ENCODE measurements at regions of chr11 and their contacts with region 1.

Region 1: GRCh38 chr11:19076744-19077589 is 16.4 kb upstream of the MRGPRX2 start:
- DNase-seq: peak in 1 of 2 experiments; percentile 91
- H3K4me3 ChIP-seq: no peak overlapping the region
- H3K27ac ChIP-seq: no peak overlapping the region
- H3K4me1 ChIP-seq: peaks cover 2 to 8% (median 6%) of the 10 kb centered on the region in 4 experiments; a peak in 4 of 7 replicates
- H3K27me3 ChIP-seq: no peaks in the 10 kb centered on the region
- CTCF ChIP-seq: peak; percentile 71 to 91 (median 86)
- EP300 ChIP-seq: no peak
- POLR2A ChIP-seq: no peak
- RAD21 ChIP-seq: peak; percentile 60 to 72

Region 2: GRCh38 chr11:18994860-18995259 is 82.1 kb before region 1 on chr11:
- CTCF ChIA-PET with region 1: no interaction called
- POLR2A ChIA-PET with region 1: no interaction called
- DNase-seq: no peak
- H3K4me3 ChIP-seq: no peak overlapping the region
- H3K27ac ChIP-seq: no peak overlapping the region
- H3K4me1 ChIP-seq: no peaks in the 10 kb centered on the region
- H3K27me3 ChIP-seq: no peaks in the 10 kb centered on the region
- CTCF ChIP-seq: no peak
- EP300 ChIP-seq: no peak
- POLR2A ChIP-seq: no peak
- RAD21 ChIP-seq: no peak

Region 3: GRCh38 chr11:19060629-19061028 is 16.3 kb before region 1 on chr11 and contains the start of gene MRGPRX2:
- CTCF ChIA-PET with region 1: interaction called, 29 read pairs
- POLR2A ChIA-PET with region 1: no interaction called
- DNase-seq: no peak
- H3K4me3 ChIP-seq: no peak within 1 kb of the TSS
- H3K27ac ChIP-seq: no peak within 1 kb of the TSS
- H3K4me1 ChIP-seq: no peaks in the 10 kb centered on the region
- H3K27me3 ChIP-seq: no peaks in the 10 kb centered on the region
- CTCF ChIP-seq: no peak
- EP300 ChIP-seq: no peak
- POLR2A ChIP-seq: no peak
- RAD21 ChIP-seq: no peak
- total RNA-seq, gene MRGPRX2: not detected in 2 replicates

Region 4: DNA sequence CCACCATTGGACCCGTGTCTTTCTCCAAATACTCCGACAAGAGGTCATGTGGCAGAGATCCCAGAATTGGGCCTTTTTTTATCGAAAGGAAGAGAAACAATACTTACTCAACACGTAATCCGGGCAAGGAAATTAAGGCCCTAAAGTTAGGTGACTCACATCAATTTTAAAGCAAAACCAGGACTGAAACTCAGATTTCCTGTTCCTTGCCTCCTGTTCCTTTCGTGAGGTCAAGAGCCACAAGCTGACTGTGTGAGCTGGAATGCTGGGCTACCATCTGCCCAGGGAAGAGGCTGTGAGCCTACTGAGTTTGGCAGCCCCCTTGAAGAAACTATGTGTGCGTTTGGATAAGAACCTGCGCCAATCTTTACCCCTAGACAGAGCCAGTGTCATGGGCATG is 10.7 kb after region 1 on chr11:
- CTCF ChIA-PET with region 1: interaction called, 34 read pairs
- POLR2A ChIA-PET with region 1: no interaction called
- DNase-seq: no peak
- H3K4me3 ChIP-seq: no peak overlapping the region
- H3K27ac ChIP-seq: no peak overlapping the region
- H3K4me1 ChIP-seq: no peaks in the 10 kb centered on the region
- H3K27me3 ChIP-seq: no peaks in the 10 kb centered on the region
- CTCF ChIP-seq: no peak
- EP300 ChIP-seq: no peak
- POLR2A ChIP-seq: no peak
- RAD21 ChIP-seq: no peak

Region 5: GRCh38 chr11:19094859-19095258 is 17.9 kb after region 1 on chr11:
- CTCF ChIA-PET with region 1: interaction called, 34 read pairs
- POLR2A ChIA-PET with region 1: no interaction called
- DNase-seq: no peak
- H3K4me3 ChIP-seq: no peak overlapping the region
- H3K27ac ChIP-seq: no peak overlapping the region
- H3K4me1 ChIP-seq: no peaks in the 10 kb centered on the region
- H3K27me3 ChIP-seq: no peaks in the 10 kb centered on the region
- CTCF ChIP-seq: no peak
- EP300 ChIP-seq: no peak
- POLR2A ChIP-seq: no peak
- RAD21 ChIP-seq: no peak

Region 6: DNA sequence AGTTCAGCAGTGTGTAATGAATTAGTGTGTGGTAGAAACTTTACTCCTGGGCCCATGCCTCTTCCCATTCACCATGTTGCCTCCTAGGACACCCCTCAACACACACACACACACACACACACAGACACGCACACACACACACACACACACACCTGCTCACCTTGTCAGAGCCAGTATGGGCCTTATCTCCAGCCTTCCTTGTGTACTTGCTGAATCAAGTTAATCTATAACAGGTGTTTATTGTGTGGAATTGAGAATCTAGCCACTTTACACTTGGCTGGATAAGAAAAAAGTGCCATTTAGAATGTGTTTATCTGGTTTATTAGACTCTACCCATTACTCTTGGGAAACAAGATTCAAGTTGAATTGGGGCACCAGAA is 25.5 kb after region 1 on chr11:
- CTCF ChIA-PET with region 1: interaction called, 21 read pairs
- POLR2A ChIA-PET with region 1: no interaction called
- DNase-seq: no peak
- H3K4me3 ChIP-seq: no peak overlapping the region
- H3K27ac ChIP-seq: no peak overlapping the region
- H3K4me1 ChIP-seq: peaks cover 0 to 7% (median 3%) of the 10 kb centered on the region in 4 experiments; a peak in 4 of 7 replicates
- H3K27me3 ChIP-seq: no peaks in the 10 kb centered on the region
- CTCF ChIP-seq: no peak
- EP300 ChIP-seq: no peak
- POLR2A ChIP-seq: no peak
- RAD21 ChIP-seq: no peak

Region 7: GRCh38 chr11:19110280-19110679 is 33.3 kb after region 1 on chr11:
- CTCF ChIA-PET with region 1: interaction called, 22 read pairs
- POLR2A ChIA-PET with region 1: interaction called, 3 read pairs
- DNase-seq: no peak
- H3K4me3 ChIP-seq: no peak overlapping the region
- H3K27ac ChIP-seq: no peak overlapping the region
- H3K4me1 ChIP-seq: peaks cover 0 to 6% (median under 1%) of the 10 kb centered on the region in 4 experiments; a peak in 3 of 7 replicates
- H3K27me3 ChIP-seq: no peaks in the 10 kb centered on the region
- CTCF ChIP-seq: no peak
- EP300 ChIP-seq: no peak
- POLR2A ChIP-seq: no peak
- RAD21 ChIP-seq: no peak

Region 8: GRCh38 chr11:19116971-19117750 is 40.2 kb after region 1 on chr11 and contains the start of gene ZDHHC13:
- CTCF ChIA-PET with region 1: interaction called, 26 read pairs
- POLR2A ChIA-PET with region 1: interaction called, 3 read pairs
- DNase-seq: peak; percentile 80 to 98
- H3K4me3 ChIP-seq: peak within 1 kb of the TSS; percentile 49 to 92 (median 81)
- H3K27ac ChIP-seq: peak within 1 kb of the TSS; percentile 56
- H3K4me1 ChIP-seq: peaks cover 0 to 7% (median under 1%) of the 10 kb centered on the region in 4 experiments; a peak in 5 of 7 replicates
- H3K27me3 ChIP-seq: no peaks in the 10 kb centered on the region
- CTCF ChIP-seq: peak in 2 of 3 experiments; percentile 10 to 27; a peak in 3 of 4 replicates
- EP300 ChIP-seq: no peak
- POLR2A ChIP-seq: peak; percentile 34 to 61
- RAD21 ChIP-seq: no peak
- total RNA-seq, gene ZDHHC13: 21.4 and 24.1 TPM in 2 replicates

Measured in H1 (cell line).